Calu3 (cell line): ENCODE measurements at regions of chr3 and their contacts with region 1.

Region 1: DNA sequence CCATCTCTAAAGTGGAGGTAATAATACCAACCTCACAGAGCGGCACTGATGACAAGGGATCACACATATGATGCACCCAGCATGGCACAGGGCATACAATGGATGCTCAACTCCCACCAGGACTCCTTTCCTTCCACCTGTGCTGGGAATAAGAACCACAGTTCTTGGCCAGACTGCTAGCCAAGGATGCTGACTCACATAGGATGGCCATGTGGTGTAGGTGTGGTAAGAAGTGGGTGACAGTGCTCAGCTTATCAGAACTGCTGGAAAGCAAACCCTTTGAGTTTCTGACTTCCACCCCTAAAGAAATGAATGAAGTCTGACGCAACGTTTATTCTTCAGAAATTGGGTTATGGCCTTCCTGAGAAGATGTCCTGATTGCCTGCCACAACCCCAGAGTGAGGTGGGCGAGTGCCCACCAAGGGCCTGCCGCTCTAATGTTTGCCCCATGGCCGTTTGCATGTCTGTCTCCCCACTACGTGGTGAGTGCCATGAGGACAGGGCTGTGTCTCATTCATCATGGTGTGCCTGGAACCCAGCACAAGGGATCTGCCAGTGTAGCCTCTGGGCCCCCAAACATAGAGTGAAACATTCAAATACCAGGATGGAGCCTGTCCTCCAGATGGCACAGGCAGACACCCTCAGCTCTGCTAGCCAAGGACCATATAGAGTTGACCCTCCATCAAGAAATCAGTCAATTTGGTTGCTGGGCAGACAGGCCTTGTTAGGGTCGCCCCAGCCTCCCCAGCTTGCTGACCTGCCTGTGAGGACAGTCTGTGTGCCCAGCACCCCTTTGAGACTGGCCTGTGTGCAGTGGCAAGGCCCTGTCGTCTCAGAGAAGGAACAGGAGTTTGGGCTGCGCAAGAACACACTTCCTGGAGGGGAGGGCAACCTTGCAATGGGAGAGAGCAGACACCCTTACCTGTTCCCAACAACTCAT is 57.6 kb upstream of the SLCO2A1 start:
- DNase-seq: no peak
- H3K4me3 Mint-ChIP-seq: no peak overlapping the region
- H3K27ac Mint-ChIP-seq: no peak overlapping the region
- H3K4me1 Mint-ChIP-seq: no peaks in the 10 kb centered on the region
- H3K27me3 Mint-ChIP-seq: peaks cover 39% of the 10 kb centered on the region
- CTCF ChIP-seq: no peak

Region 2: GRCh38 chr3:135426508-135426907 is 1339.2 kb after region 1 on chr3:
- CTCF ChIA-PET with region 1: interaction called, 11 read pairs
- intact Hi-C with region 1: no loop called
- DNase-seq: no peak
- H3K4me3 Mint-ChIP-seq: no peak overlapping the region
- H3K27ac Mint-ChIP-seq: no peak overlapping the region
- H3K4me1 Mint-ChIP-seq: no peaks in the 10 kb centered on the region
- H3K27me3 Mint-ChIP-seq: no peaks in the 10 kb centered on the region
- CTCF ChIP-seq: no peak